Tibial artery (tissue), 4 donors: ENCODE measurements at regions of chr5 and their contacts with region 1.

Region 1: DNA sequence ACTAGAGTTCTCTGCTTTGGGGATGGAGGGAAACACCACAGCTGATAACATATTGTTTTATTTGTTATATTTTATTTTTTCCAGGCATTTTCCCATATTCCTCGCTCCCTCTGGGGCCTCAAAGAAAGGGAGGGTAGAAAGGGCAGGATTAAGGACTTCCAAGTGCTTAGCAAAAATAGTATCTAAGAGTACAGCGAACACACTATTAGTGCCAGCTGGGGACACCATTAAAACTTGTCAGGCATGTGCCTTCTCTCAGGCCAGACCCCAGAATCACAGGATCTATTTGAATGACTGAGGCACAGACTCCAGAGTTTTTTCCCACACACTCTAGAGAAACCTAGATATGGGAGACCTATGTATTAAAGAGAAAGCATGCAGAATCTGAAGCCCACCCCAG is 451.0 kb upstream of the TRPC7 start:
- DNase-seq: no peak
- H3K4me3 ChIP-seq: no peak overlapping the region
- H3K27ac ChIP-seq: no peak overlapping the region
- H3K4me1 ChIP-seq: peaks cover 0 to 2% (median 0%) of the 10 kb centered on the region in 4 donors
- H3K27me3 ChIP-seq: no peaks in the 10 kb centered on the region
- CTCF ChIP-seq: no peak

Region 2: GRCh38 chr5:136864960-136865359 is 48.6 kb after region 1 on chr5:
- intact Hi-C with region 1: loop called (anchors 2 kb)
- DNase-seq: no peak
- H3K4me3 ChIP-seq: no peak overlapping the region
- H3K27ac ChIP-seq: no peak overlapping the region
- H3K4me1 ChIP-seq: no peaks in the 10 kb centered on the region
- H3K27me3 ChIP-seq: no peaks in the 10 kb centered on the region
- CTCF ChIP-seq: no peak